Mammary epithelial cell (primary cell): ENCODE measurements at regions of chr16 and their contacts with region 1.

Region 1: GRCh38 chr16:3690470-3690928 is 26.8 kb downstream of the TRAP1 start:
- DNase-seq: peak; percentile 77
- H3K4me3 ChIP-seq: peak overlapping the region in 2 of 3 experiments; percentile 11 to 21
- H3K27ac ChIP-seq: no peak overlapping the region
- H3K4me1 ChIP-seq: peaks cover 5% of the 10 kb centered on the region
- H3K27me3 ChIP-seq: no peaks in the 10 kb centered on the region
- CTCF ChIP-seq: peak; percentile 83 to 93

Region 2: GRCh38 chr16:3717235-3718018 is 26.9 kb after region 1 on chr16 and contains the start of gene TRAP1:
- CTCF ChIA-PET with region 1: no interaction called
- dilution Hi-C with region 1: no loop called
- in situ Hi-C with region 1: no loop called
- intact Hi-C with region 1: loop called (anchors 2 kb)
- DNase-seq: peak; percentile 68
- H3K4me3 ChIP-seq: peak within 1 kb of the TSS; percentile 95 to 100 (median 96)
- H3K27ac ChIP-seq: peak within 1 kb of the TSS; percentile 58
- H3K4me1 ChIP-seq: peaks cover 11% of the 10 kb centered on the region
- H3K27me3 ChIP-seq: no peaks in the 10 kb centered on the region
- CTCF ChIP-seq: no peak
- total RNA-seq, gene TRAP1: 73.5 to 97.2 TPM

Region 3: GRCh38 chr16:3774156-3774767 is 83.8 kb after region 1 on chr16:
- CTCF ChIA-PET with region 1: no interaction called
- dilution Hi-C with region 1: no loop called
- in situ Hi-C with region 1: no loop called
- intact Hi-C with region 1: loop called (anchors 5 kb)
- DNase-seq: no peak
- H3K4me3 ChIP-seq: no peak overlapping the region
- H3K27ac ChIP-seq: no peak overlapping the region
- H3K4me1 ChIP-seq: peaks cover 7% of the 10 kb centered on the region
- H3K27me3 ChIP-seq: no peaks in the 10 kb centered on the region
- CTCF ChIP-seq: no peak

Region 4: GRCh38 chr16:3961449-3961849 is 270.9 kb after region 1 on chr16:
- CTCF ChIA-PET with region 1: no interaction called
- dilution Hi-C with region 1: no loop called
- in situ Hi-C with region 1: no loop called
- intact Hi-C with region 1: loop called (anchors 5 kb)
- DNase-seq: peak; percentile 58
- H3K4me3 ChIP-seq: no peak overlapping the region
- H3K27ac ChIP-seq: no peak overlapping the region
- H3K4me1 ChIP-seq: no peaks in the 10 kb centered on the region
- H3K27me3 ChIP-seq: peaks cover 7% of the 10 kb centered on the region
- CTCF ChIP-seq: no peak